CD14-positive monocyte (primary cell): ENCODE measurements at regions of chr11 and their contacts with region 1.

Region 1: DNA sequence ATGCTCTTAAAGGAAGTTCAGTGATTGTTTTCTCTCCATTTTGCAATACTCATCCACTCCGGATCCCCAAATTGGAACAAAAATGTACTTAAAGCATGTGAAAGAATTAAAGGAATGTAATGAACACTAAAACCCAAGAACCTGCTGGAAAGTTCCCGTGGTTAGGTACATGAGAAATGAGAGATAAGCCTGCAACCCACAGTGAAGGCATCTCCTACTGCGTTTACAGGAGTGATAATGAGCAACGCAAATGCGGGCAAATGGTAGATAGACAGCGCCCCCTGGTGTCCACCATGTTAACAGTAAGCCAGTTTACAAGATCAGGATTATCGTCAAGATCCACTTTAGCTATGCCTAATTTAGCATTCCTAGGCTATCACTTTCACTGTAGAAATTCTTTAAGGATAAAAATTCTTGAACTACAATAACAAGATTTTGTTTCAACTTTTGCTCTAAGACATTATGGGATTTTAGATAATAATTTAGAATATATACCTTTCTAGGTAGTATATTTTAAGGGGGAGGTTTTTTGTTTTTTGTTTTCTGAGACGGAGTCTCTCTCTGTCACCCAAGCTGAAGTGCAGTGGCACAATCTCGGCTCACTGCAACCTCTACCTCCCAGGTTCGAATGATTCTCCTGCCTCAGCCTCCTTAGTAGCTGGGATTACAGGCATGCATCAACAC is 29.9 kb downstream of the ALG9 start:
- DNase-seq: peak; percentile 75 to 84 (median 81)
- H3K4me3 ChIP-seq: no peak overlapping the region
- H3K4me3 Mint-ChIP-seq: peak overlapping the region; percentile 58 to 71
- H3K27ac ChIP-seq: no peak overlapping the region
- H3K27ac Mint-ChIP-seq: peak overlapping the region in 1 of 7 donors; percentile 16
- H3K4me1 ChIP-seq: peaks cover 33 to 40% of the 10 kb centered on the region in 2 donors
- H3K4me1 Mint-ChIP-seq: peaks cover 37% of the 10 kb centered on the region
- H3K27me3 ChIP-seq: no peaks in the 10 kb centered on the region
- H3K27me3 Mint-ChIP-seq: peaks cover 0 to 2% (median 0%) of the 10 kb centered on the region in 3 donors
- CTCF ChIP-seq: peak; percentile 90

Region 2: DNA sequence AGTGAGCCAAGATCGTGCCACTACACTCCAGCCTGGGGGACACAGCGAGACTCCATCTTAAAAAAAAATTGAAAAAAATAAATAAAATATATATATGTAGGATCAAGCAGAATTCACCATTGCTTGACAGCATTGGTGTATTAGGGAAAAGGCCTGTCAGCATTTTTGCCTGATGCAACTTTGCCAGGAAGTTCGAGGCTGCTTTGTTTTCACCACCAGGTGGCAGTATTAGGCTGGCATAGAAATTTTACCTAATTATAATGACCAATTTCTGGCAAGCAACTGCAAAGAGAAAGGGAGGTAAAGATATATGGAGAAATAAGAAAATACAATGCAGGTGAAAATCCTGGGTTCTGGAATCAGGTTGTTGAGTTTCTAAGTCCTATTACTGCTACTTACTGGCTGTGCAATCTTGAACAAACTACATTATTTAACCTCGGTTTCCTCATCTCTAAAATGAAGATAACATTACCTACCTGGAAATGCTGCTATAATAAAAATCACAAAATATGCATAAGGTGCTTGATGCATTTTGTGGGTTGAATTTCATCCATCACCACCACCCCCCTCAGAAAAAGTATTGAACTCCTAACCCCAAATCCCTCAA is 276.3 kb before region 1 on chr11:
- intact Hi-C with region 1: loop called in 1 of 2 experiments (anchors 10 kb)
- DNase-seq: peak; percentile 41 to 66 (median 53)
- H3K4me3 ChIP-seq: no peak overlapping the region
- H3K4me3 Mint-ChIP-seq: no peak overlapping the region
- H3K27ac ChIP-seq: no peak overlapping the region
- H3K27ac Mint-ChIP-seq: no peak overlapping the region
- H3K4me1 ChIP-seq: no peaks in the 10 kb centered on the region
- H3K4me1 Mint-ChIP-seq: peaks cover 3% of the 10 kb centered on the region
- H3K27me3 ChIP-seq: no peaks in the 10 kb centered on the region
- H3K27me3 Mint-ChIP-seq: peaks cover 0 to 1% (median 0%) of the 10 kb centered on the region in 3 donors
- CTCF ChIP-seq: peak; percentile 90

Region 3: GRCh38 chr11:111586388-111586831 is 255.1 kb before region 1 on chr11:
- intact Hi-C with region 1: loop called in 1 of 2 experiments (anchors 5 kb)
- DNase-seq: peak in 2 of 3 donors; percentile 41 to 49
- H3K4me3 ChIP-seq: no peak overlapping the region
- H3K4me3 Mint-ChIP-seq: no peak overlapping the region
- H3K27ac ChIP-seq: no peak overlapping the region
- H3K27ac Mint-ChIP-seq: peak overlapping the region in 1 of 7 donors; percentile 31
- H3K4me1 ChIP-seq: no peaks in the 10 kb centered on the region
- H3K4me1 Mint-ChIP-seq: peaks cover 9% of the 10 kb centered on the region
- H3K27me3 ChIP-seq: no peaks in the 10 kb centered on the region
- H3K27me3 Mint-ChIP-seq: peaks cover 0 to 2% (median 0%) of the 10 kb centered on the region in 3 donors
- CTCF ChIP-seq: peak; percentile 68

Region 4: DNA sequence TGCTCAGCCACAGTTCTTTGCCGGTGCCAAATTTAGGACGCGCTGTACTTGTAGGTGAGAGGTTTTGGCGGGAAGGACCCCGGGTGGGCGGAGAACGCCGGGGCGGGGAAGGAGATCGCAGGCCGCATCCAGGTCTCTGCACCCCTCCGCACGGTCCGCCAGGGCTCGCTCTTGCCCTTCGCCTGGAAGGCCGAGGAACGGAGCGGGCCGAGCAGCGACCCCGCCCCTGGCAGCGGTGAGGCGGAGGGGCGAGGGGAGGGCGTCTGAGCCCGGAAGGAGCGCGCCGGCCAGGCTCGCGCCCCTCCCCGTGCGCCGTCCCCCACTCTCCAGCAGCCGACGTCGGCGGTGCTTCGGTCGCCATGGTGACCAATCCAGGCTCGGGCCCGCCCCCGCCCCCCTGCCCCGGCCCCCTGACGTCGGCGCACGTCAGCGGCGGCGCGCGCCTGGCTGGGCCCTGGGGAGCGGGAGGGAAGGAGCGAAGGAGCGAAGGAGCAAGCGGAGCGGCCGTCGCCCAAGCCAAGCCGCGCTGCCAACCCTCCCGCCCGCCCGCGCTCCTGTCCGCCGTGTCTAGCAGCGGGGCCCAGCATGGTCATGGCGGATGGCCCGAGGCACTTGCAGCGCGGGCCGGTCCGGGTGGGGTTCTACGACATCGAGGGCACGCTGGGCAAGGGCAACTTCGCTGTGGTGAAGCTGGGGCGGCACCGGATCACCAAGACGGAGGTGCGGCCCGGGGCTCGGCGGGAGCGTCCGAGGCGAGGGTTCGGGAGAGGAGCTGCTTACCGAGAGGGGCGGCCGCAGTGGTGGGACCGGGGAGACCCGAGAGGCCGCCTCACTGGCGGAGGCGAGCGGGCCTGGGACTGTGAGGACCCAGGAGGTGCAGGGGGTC is 239.3 kb before region 1 on chr11 and contains the start of gene SIK2:
- intact Hi-C with region 1: loop called in 1 of 2 experiments (anchors 5 kb)
- DNase-seq: peak; percentile 85 to 94 (median 90)
- H3K4me3 ChIP-seq: peak within 1 kb of the TSS; percentile 71 to 98 (median 81)
- H3K4me3 Mint-ChIP-seq: peak within 1 kb of the TSS; percentile 94 to 97
- H3K27ac ChIP-seq: peak within 1 kb of the TSS; percentile 88 to 94
- H3K27ac Mint-ChIP-seq: peak within 1 kb of the TSS; percentile 92 to 96 (median 95)
- H3K4me1 ChIP-seq: peaks cover 17 to 26% of the 10 kb centered on the region in 2 donors
- H3K4me1 Mint-ChIP-seq: peaks cover 29% of the 10 kb centered on the region
- H3K27me3 ChIP-seq: no peaks in the 10 kb centered on the region
- H3K27me3 Mint-ChIP-seq: peaks cover 0 to 1% (median 0%) of the 10 kb centered on the region in 3 donors
- CTCF ChIP-seq: peak; percentile 81
- polyA plus RNA-seq, gene SIK2: 0.16 to 8.8 (median 0.23) TPM

Region 5: DNA sequence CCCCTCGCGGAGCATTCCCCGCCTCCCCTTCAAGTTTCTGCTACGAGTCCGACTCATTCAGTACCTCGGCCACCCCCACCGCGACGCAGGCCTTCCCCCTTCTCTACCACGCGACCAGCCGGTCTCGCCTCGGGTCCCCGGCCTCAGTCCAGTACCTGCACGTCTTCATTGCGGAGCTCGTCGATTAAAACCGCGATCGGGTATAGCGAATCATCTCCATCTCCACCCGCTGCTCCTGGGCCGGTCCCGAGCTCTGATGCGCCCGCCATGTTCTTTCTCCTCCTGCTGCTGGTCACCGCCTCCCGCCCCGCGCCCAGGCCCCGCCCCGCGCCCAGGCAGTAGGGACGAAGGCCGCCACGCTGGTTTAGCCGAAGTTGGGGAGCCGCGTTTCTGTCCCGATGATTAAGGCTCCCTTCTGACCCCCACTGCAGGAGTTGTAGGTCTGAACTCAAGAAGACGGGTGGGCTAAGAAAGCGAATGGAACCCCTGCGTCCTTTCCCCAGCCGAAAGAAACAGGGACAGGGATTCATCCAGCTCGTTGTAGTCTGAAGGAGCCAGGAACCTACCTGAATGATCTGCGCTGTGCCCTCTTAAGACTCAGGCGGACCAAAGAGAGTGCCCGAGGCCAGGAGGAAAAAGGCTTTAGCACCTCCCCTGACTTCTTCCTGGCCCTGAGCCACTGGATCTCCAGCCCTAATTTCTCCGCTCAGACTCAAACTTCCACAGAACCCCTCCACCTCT is 75.2 kb before region 1 on chr11 and contains the start of gene PPP2R1B:
- intact Hi-C with region 1: loop called (anchors 5 to 10 kb)
- DNase-seq: peak; percentile 33 to 62 (median 53)
- H3K4me3 ChIP-seq: peak within 1 kb of the TSS; percentile 83 to 93 (median 85)
- H3K4me3 Mint-ChIP-seq: peak within 1 kb of the TSS; percentile 100
- H3K27ac ChIP-seq: peak within 1 kb of the TSS; percentile 11 to 65
- H3K27ac Mint-ChIP-seq: peak within 1 kb of the TSS; percentile 80 to 99 (median 94)
- H3K4me1 ChIP-seq: peaks cover 14 to 23% of the 10 kb centered on the region in 2 donors
- H3K4me1 Mint-ChIP-seq: peaks cover 21% of the 10 kb centered on the region
- H3K27me3 ChIP-seq: no peaks in the 10 kb centered on the region
- H3K27me3 Mint-ChIP-seq: peaks cover 0 to 7% (median 6%) of the 10 kb centered on the region in 3 donors
- CTCF ChIP-seq: no peak
- polyA plus RNA-seq, gene PPP2R1B: 5.4 to 16.9 (median 11.2) TPM

Region 6: GRCh38 chr11:111777094-111778046 is 64.1 kb before region 1 on chr11:
- intact Hi-C with region 1: loop called in 1 of 2 experiments (anchors 10 kb)
- DNase-seq: peak; percentile 38 to 66 (median 60)
- H3K4me3 ChIP-seq: no peak overlapping the region
- H3K4me3 Mint-ChIP-seq: no peak overlapping the region
- H3K27ac ChIP-seq: no peak overlapping the region
- H3K27ac Mint-ChIP-seq: no peak overlapping the region
- H3K4me1 ChIP-seq: no peaks in the 10 kb centered on the region
- H3K4me1 Mint-ChIP-seq: no peaks in the 10 kb centered on the region
- H3K27me3 ChIP-seq: no peaks in the 10 kb centered on the region
- H3K27me3 Mint-ChIP-seq: no peaks in the 10 kb centered on the region
- CTCF ChIP-seq: peak; percentile 73